Activated CD8-positive, alpha-beta memory T cell treated with anti-CD3 and anti-CD28 coated beads, Interleukin-2, amount 10 ng/mL, durations not matched to agents 7 days and 5 days (primary cell): ENCODE measurements at regions of chr9 and their contacts with region 1.

Region 1: GRCh38 chr9:75027187-75028107 is 646 bp downstream of the CARNMT1 start:
- DNase-seq: peak; percentile 77
- ATAC-seq: peak; percentile 45
- H3K4me3 Mint-ChIP-seq: peak overlapping the region; percentile 98
- H3K27ac Mint-ChIP-seq: peak overlapping the region; percentile 93
- H3K4me1 Mint-ChIP-seq: peaks cover 37% of the 10 kb centered on the region
- H3K27me3 Mint-ChIP-seq: no peaks in the 10 kb centered on the region

Region 2: GRCh38 chr9:74952281-74953151 is 74.9 kb before region 1 on chr9 and contains the start of gene C9orf40:
- CTCF ChIA-PET with region 1: interaction called, 51 read pairs
- DNase-seq: peak; percentile 94
- ATAC-seq: peak; percentile 93
- H3K4me3 Mint-ChIP-seq: peak within 1 kb of the TSS; percentile 98
- H3K27ac Mint-ChIP-seq: peak within 1 kb of the TSS; percentile 97
- H3K4me1 Mint-ChIP-seq: peaks cover 45% of the 10 kb centered on the region
- H3K27me3 Mint-ChIP-seq: no peaks in the 10 kb centered on the region
- total RNA-seq, gene C9orf40: 19.0 to 25.5 TPM

Region 3: DNA sequence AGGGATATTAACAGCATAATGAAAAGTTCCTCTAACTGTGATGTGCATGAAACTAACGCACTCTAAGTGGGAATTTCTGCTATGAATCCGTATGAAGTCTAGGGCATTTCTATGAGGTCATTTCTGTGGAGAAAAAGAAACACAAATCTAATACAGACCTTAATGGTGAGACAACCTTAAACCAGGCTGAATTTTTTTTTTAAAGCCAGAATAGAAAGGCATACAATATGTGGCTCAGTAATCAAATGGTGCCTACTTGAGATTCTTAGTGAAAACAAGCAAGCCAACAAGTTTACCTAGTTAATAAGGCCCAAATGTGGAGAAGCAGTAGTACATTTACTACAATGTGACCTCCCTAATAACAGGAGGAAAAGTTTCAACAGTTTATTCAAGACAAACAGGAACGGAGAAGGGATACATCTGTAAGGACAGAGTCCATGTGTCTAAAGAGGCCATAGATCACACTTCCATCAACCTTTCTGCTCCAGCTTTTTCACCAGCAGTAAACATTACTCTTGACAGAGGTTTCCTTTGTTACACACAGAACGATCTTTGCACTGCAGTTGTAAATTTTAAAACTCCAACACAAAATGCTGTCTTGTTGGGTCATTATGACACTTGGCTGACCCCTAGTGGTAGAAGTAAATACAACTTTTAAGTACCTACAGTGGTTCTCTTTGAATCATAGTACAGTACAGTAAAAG is 25.6 kb before region 1 on chr9:
- CTCF ChIA-PET with region 1: interaction called, 11 read pairs
- DNase-seq: no peak
- ATAC-seq: peak; percentile 89
- H3K4me3 Mint-ChIP-seq: no peak overlapping the region
- H3K27ac Mint-ChIP-seq: no peak overlapping the region
- H3K4me1 Mint-ChIP-seq: peaks cover 5% of the 10 kb centered on the region
- H3K27me3 Mint-ChIP-seq: no peaks in the 10 kb centered on the region

Region 4: GRCh38 chr9:75013735-75014134 is 13.7 kb before region 1 on chr9:
- CTCF ChIA-PET with region 1: interaction called, 19 read pairs
- DNase-seq: no peak
- ATAC-seq: no peak
- H3K4me3 Mint-ChIP-seq: no peak overlapping the region
- H3K27ac Mint-ChIP-seq: peak overlapping the region; percentile 40
- H3K4me1 Mint-ChIP-seq: peaks cover 29% of the 10 kb centered on the region
- H3K27me3 Mint-ChIP-seq: no peaks in the 10 kb centered on the region

Region 5: DNA sequence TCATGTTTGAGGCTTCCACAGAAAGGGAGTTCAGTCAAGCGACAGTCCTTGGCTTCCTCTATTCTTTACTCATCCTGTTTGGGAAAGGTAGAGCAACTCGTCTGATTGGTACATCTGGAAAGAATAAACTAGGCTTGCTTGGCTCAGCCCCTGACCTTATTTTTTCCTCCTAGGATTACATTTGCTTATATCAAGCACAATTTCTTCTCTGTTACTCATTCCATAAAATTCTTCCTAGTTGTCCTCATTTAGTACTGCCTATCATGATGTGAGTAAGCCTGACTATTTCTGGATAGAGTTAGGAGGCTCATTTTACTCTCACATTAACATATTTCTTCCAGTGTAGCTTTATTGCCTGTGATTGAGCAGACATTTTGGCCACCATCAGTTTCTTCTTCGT is 11.6 kb after region 1 on chr9:
- CTCF ChIA-PET with region 1: no interaction called
- DNase-seq: no peak
- ATAC-seq: no peak
- H3K4me3 Mint-ChIP-seq: no peak overlapping the region
- H3K27ac Mint-ChIP-seq: no peak overlapping the region
- H3K4me1 Mint-ChIP-seq: peaks cover 1% of the 10 kb centered on the region
- H3K27me3 Mint-ChIP-seq: peaks cover 2% of the 10 kb centered on the region

Region 6: DNA sequence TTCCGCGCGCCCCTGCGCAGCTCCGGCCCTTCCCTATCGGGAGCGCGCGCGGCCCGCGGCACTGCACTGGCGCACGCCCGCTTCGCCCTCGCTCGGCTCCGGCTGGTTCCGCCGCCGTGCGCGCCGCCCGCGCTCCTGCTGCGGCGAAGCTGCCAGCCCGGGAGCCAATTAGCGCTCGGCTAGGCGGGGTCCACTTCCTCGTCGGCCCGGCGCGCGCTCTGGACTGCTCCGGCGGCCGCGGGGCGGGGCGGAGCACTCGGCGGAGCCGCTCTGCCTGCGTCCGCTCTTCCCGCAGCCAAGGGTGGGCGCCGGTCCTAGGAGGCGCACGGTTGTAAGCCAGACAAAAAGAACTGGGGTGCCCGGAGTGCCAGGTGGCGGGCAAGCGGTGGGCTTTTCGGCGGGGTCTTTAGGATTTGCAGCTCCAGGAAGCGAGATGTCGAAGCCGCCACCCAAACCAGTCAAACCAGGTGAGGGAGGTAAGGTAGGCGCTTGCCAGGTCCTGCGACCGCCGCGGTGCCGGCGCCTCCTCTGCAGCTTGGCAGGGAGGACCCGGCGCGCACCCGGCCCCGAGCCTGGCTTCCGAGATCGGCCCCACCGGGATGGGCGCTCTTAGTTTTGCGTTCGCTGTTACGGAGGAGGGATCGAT is 60.9 kb after region 1 on chr9 and contains the start of gene OSTF1:
- CTCF ChIA-PET with region 1: interaction called, 16 read pairs
- DNase-seq: peak; percentile 95
- ATAC-seq: peak; percentile 89
- H3K4me3 Mint-ChIP-seq: peak within 1 kb of the TSS; percentile 93
- H3K27ac Mint-ChIP-seq: peak within 1 kb of the TSS; percentile 97
- H3K4me1 Mint-ChIP-seq: peaks cover 61% of the 10 kb centered on the region
- H3K27me3 Mint-ChIP-seq: no peaks in the 10 kb centered on the region
- total RNA-seq, gene OSTF1: 149 to 198 TPM